ENCODE measurements at regions of chr6 and their contacts with region 1.

Region 1: DNA sequence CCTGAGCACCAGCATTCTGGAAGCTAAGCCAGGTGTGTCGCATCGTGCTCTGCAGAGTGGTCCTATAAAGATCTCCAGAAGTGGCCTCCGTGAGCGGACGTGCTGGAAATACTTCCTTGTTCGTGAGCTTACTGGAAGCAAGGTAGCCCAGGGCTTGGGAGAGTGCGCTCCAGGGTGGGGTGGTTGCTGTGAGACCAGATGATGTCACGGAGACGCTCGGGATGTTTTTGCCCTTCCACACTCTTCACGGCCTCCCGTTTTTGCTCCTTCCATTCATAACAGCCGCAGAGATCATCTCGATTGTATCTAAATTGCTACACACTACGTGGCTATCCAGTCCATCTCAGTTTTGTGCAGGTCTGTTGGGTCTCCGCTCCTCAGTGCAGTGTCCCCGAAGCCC is 373.4 kb downstream of the THBS2 start:
- DNase-seq: no peak
- CTCF ChIP-seq: no peak

Region 2: GRCh38 chr6:168526841-168527281 is 353.4 kb before region 1 on chr6:
- CTCF ChIA-PET with region 1: no interaction called
- POLR2A ChIA-PET with region 1: no interaction called
- DNase-seq: no peak
- CTCF ChIP-seq: no peak

Region 3: GRCh38 chr6:168895102-168895812 is 15.0 kb after region 1 on chr6:
- CTCF ChIA-PET with region 1: interaction called, 19 read pairs
- POLR2A ChIA-PET with region 1: no interaction called
- DNase-seq: peak; percentile 85
- CTCF ChIP-seq: peak; percentile 79

Measured in GM10248 (cell line).